ENCODE measurements at regions of chr2 and their contacts with region 1.

Region 1: GRCh38 chr2:69829256-69830046 is at the start of gene GMCL1:
- DNase-seq: peak; percentile 99
- H3K4me3 Mint-ChIP-seq: peak within 1 kb of the TSS; percentile 94
- H3K27ac Mint-ChIP-seq: peak within 1 kb of the TSS; percentile 88
- H3K4me1 Mint-ChIP-seq: peaks cover 51% of the 10 kb centered on the region
- H3K27me3 Mint-ChIP-seq: no peaks in the 10 kb centered on the region
- total RNA-seq, gene GMCL1: 15.9 to 19.4 TPM

Region 2: DNA sequence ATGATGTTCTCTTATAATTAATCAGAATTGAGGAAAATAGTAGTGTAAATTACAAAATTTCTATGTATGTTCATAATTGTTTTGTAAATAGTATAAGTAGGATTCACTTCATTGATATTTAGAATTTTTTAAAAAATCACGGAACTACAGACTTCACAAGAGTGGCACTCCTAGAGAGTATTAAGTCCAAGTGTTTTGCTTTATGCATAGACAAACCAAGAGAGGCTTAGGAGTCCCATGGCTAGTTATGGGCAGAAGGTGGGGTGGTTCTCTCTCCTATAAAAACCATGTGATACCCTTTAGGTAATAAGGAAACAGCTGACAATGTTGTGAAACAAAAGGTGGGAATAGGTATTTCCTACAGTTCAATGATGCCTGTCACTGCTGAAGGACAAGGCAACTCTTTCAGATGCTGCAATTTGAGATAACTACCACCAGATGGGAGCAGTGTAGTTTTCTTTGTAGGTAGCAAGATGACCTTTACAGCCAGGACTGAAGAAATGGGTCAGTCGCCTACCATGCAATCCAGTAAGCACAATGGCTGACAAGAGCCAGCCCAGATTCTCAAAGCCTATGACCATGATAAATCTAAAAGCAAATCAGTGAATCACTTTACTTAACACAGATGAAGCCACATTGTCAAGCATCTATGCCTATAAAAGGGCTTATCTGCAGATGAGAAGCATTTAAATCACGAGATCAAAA is 269.9 kb before region 1 on chr2:
- CTCF ChIA-PET with region 1: no interaction called
- intact Hi-C with region 1: loop called (anchors 5 kb)
- DNase-seq: no peak
- H3K4me3 Mint-ChIP-seq: no peak overlapping the region
- H3K27ac Mint-ChIP-seq: peak overlapping the region; percentile 34
- H3K4me1 Mint-ChIP-seq: peaks cover 78% of the 10 kb centered on the region
- H3K27me3 Mint-ChIP-seq: no peaks in the 10 kb centered on the region

Region 3: GRCh38 chr2:69773206-69773767 is 56.2 kb before region 1 on chr2:
- CTCF ChIA-PET with region 1: no interaction called
- intact Hi-C with region 1: loop called (anchors 2 kb)
- DNase-seq: peak; percentile 34
- H3K4me3 Mint-ChIP-seq: no peak overlapping the region
- H3K27ac Mint-ChIP-seq: no peak overlapping the region
- H3K4me1 Mint-ChIP-seq: peaks cover 44% of the 10 kb centered on the region
- H3K27me3 Mint-ChIP-seq: no peaks in the 10 kb centered on the region

Region 4: GRCh38 chr2:69914170-69914960 is 84.9 kb after region 1 on chr2:
- CTCF ChIA-PET with region 1: no interaction called
- intact Hi-C with region 1: loop called (anchors 1 kb)
- DNase-seq: peak; percentile 100
- H3K4me3 Mint-ChIP-seq: peak overlapping the region; percentile 83
- H3K27ac Mint-ChIP-seq: peak overlapping the region; percentile 87
- H3K4me1 Mint-ChIP-seq: peaks cover 36% of the 10 kb centered on the region
- H3K27me3 Mint-ChIP-seq: no peaks in the 10 kb centered on the region

Region 5: GRCh38 chr2:69933839-69934613 is 104.6 kb after region 1 on chr2:
- CTCF ChIA-PET with region 1: no interaction called
- intact Hi-C with region 1: no loop called
- DNase-seq: peak; percentile 48
- H3K4me3 Mint-ChIP-seq: no peak overlapping the region
- H3K27ac Mint-ChIP-seq: no peak overlapping the region
- H3K4me1 Mint-ChIP-seq: peaks cover 26% of the 10 kb centered on the region
- H3K27me3 Mint-ChIP-seq: no peaks in the 10 kb centered on the region

Region 6: DNA sequence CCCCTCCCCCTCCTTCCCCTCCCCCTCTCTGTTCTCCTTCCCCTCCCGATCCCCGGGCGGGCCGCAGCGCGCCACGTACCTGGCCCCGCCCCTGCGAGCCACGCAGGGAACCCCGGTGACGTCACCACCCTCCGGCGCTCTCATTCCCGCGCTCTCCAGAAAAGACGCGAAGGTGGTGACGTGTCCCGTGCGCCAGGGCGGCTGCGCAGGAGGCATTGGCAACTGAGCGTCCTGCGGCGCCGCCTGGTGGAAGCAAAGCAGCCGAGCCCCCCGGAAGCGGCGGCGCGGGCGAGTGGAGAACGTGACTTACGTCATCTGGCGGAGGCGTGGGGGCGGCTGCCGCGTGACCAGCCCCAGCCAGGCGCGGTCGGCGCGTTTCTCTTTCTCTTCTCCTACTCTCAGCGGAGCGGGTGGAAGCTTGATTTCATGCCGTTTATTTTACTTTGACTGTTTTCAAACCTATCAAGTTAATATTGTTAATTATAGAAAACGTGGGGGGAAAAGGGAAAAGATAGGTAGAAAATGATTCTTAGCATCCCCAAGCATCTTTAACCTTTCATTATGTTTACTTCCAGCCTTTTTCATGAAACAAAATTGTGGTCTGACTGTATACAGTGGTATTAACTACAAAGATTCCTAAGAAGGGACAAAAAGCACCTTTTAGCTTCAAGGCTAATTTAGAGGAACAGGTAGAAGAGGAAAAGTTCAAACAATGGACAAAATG is 313.3 kb after region 1 on chr2:
- CTCF ChIA-PET with region 1: no interaction called
- intact Hi-C with region 1: loop called (anchors 1 kb)
- DNase-seq: peak; percentile 100
- H3K4me3 Mint-ChIP-seq: peak overlapping the region; percentile 93
- H3K27ac Mint-ChIP-seq: peak overlapping the region; percentile 99
- H3K4me1 Mint-ChIP-seq: peaks cover 53% of the 10 kb centered on the region
- H3K27me3 Mint-ChIP-seq: no peaks in the 10 kb centered on the region